Left cardiac atrium (tissue), 4 donors: ENCODE measurements at regions of chr19 and their contacts with region 1.

Region 1: GRCh38 chr19:7943444-7944176 is at the start of gene TIMM44:
- DNase-seq: peak; percentile 99
- ATAC-seq: peak; percentile 99 to 100
- total RNA-seq, gene TIMM44: 70.6 to 73.8 TPM

Region 2: GRCh38 chr19:8005534-8006256 is 62.1 kb after region 1 on chr19 and contains the start of gene ELAVL1:
- intact Hi-C with region 1: loop called (anchors 5 to 10 kb)
- DNase-seq: peak; percentile 93
- ATAC-seq: peak; percentile 94 to 97
- total RNA-seq, gene ELAVL1: 51.6 to 68.3 TPM

Region 3: GRCh38 chr19:8141726-8142512 is 198.3 kb after region 1 on chr19:
- intact Hi-C with region 1: no loop called
- DNase-seq: no peak
- ATAC-seq: no peak